CD4-positive, alpha-beta memory T cell (primary cell): ENCODE measurements at regions of chr1 and their contacts with region 1.

Region 1: GRCh38 chr1:18575620-18576019 is 55.0 kb upstream of the PAX7 start:
- DNase-seq: peak in 3 of 5 donors; percentile 14 to 23 (median 16)
- H3K4me3 ChIP-seq: no peak overlapping the region
- H3K4me3 Mint-ChIP-seq: no peak overlapping the region
- H3K27ac ChIP-seq: no peak overlapping the region
- H3K27ac Mint-ChIP-seq: no peak overlapping the region
- H3K4me1 ChIP-seq: no peaks in the 10 kb centered on the region
- H3K4me1 Mint-ChIP-seq: peaks cover 0 to 1% (median 0%) of the 10 kb centered on the region in 4 donors
- H3K27me3 ChIP-seq: no peaks in the 10 kb centered on the region
- H3K27me3 Mint-ChIP-seq: peaks cover 6 to 17% of the 10 kb centered on the region in 2 donors

Region 2: DNA sequence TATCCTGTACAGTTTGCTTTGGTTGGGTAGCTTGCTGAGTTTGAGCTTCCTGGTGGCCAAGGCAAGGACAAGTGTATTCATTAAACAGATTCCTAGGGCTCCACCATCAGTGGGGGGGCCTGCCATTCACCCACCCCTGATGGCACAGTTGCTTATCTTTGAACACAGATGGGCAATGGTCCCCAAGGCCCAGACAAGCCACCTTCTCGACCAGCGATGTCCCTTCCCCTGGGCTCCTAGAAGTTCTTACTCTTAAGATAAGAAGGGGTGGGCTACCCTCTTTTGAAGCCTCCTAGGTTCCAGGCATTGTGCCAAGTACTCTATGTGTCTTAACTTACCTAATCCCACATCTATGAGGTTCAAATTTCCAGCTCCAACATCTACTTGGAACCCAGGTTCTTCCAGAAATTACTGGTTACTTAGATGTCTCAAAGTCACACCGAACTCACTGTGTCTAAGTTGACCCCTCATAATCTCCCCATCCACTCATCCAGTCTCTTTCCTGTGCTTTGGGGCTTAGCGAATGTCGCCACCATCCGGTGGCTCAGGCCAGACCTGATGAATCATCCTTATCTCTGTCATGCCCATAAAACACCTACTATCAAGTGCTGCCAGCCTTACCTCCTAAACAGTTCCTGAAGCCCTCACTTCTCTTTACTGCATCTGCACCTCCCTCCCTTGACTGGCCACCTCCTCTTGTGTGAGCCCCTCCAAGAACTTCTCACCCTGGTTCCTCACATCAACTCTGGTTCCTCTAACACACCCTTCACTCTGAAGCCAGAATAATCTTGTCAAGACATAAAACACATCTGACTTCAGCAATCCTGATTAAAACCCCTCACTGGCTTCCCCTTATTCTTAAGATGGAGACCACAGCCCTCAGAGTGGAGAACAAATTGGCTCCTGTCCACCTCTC is 44.8 kb before region 1 on chr1:
- CTCF ChIA-PET with region 1: no interaction called
- POLR2A ChIA-PET with region 1: no interaction called
- intact Hi-C with region 1: no loop called
- DNase-seq: no peak
- H3K4me3 ChIP-seq: no peak overlapping the region
- H3K4me3 Mint-ChIP-seq: no peak overlapping the region
- H3K27ac ChIP-seq: no peak overlapping the region
- H3K27ac Mint-ChIP-seq: no peak overlapping the region
- H3K4me1 ChIP-seq: no peaks in the 10 kb centered on the region
- H3K4me1 Mint-ChIP-seq: no peaks in the 10 kb centered on the region
- H3K27me3 ChIP-seq: no peaks in the 10 kb centered on the region
- H3K27me3 Mint-ChIP-seq: peaks cover 11 to 18% of the 10 kb centered on the region in 2 donors

Region 3: DNA sequence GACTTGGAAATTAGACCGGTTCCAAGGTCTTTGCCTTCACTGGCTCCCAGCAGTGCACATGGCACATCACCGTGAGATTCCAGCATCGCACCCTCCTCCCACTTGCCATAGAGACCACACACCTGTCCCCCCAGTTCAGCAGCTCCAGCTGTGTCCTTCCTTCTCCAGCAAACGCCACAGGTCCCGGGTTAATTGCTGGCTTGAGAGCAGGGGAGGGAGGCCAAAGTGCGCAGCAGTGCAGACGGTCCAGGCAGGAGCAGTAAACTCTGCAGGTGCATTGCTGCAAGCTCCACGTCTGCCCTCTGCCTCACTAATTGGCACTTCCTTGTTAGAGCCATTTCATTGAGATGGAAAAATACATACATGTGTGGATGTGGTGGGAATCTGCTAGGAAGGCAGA is 29.6 kb before region 1 on chr1:
- CTCF ChIA-PET with region 1: no interaction called
- POLR2A ChIA-PET with region 1: no interaction called
- intact Hi-C with region 1: no loop called
- DNase-seq: no peak
- H3K4me3 ChIP-seq: no peak overlapping the region
- H3K4me3 Mint-ChIP-seq: no peak overlapping the region
- H3K27ac ChIP-seq: no peak overlapping the region
- H3K27ac Mint-ChIP-seq: no peak overlapping the region
- H3K4me1 ChIP-seq: no peaks in the 10 kb centered on the region
- H3K4me1 Mint-ChIP-seq: no peaks in the 10 kb centered on the region
- H3K27me3 ChIP-seq: no peaks in the 10 kb centered on the region
- H3K27me3 Mint-ChIP-seq: peaks cover 27 to 50% of the 10 kb centered on the region in 2 donors

Region 4: DNA sequence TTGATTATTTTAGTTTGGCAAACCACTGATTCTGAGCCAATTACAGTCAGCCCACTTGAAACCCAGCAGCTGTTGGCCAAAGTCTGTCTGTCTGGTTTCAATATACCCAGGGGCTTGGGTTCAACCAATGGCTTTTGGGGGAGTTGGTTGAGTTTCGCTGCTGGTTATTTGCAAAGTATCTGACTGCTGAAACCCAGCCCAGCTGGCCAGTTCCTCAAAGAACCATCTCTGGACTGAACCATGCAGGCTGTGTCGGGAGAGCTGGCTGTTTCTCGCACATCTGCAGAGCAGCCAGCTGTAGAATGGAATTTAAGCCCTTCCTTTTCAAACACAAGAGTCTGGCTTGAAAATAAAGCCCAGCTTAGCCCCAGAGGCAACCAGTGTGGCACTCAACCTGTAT is 10.9 kb before region 1 on chr1:
- CTCF ChIA-PET with region 1: interaction called, 30 read pairs
- POLR2A ChIA-PET with region 1: no interaction called
- intact Hi-C with region 1: no loop called
- DNase-seq: no peak
- H3K4me3 ChIP-seq: no peak overlapping the region
- H3K4me3 Mint-ChIP-seq: no peak overlapping the region
- H3K27ac ChIP-seq: no peak overlapping the region
- H3K27ac Mint-ChIP-seq: no peak overlapping the region
- H3K4me1 ChIP-seq: no peaks in the 10 kb centered on the region
- H3K4me1 Mint-ChIP-seq: no peaks in the 10 kb centered on the region
- H3K27me3 ChIP-seq: no peaks in the 10 kb centered on the region
- H3K27me3 Mint-ChIP-seq: peaks cover 26 to 42% of the 10 kb centered on the region in 2 donors

Region 5: DNA sequence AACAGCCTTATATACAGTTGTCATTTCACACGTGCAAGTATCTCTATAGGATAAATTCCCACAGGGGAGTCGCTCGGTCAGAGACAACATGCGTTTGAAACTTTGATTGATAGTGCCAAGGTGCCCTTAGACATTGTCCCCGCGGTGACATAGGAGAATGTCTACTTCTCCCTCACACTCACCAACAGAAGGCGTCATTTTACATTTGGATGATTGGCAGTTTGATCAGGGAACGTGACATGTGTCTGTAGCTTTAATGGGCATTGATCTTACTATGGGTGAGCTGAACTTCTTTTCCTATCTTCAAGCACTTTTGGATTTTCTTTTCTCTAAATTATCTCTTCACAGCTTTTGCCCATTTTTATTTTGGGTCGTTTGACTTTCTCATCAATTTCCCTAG is 12.5 kb after region 1 on chr1:
- CTCF ChIA-PET with region 1: interaction called, 36 read pairs
- POLR2A ChIA-PET with region 1: no interaction called
- intact Hi-C with region 1: no loop called
- DNase-seq: no peak
- H3K4me3 ChIP-seq: no peak overlapping the region
- H3K4me3 Mint-ChIP-seq: no peak overlapping the region
- H3K27ac ChIP-seq: no peak overlapping the region
- H3K27ac Mint-ChIP-seq: no peak overlapping the region
- H3K4me1 ChIP-seq: no peaks in the 10 kb centered on the region
- H3K4me1 Mint-ChIP-seq: no peaks in the 10 kb centered on the region
- H3K27me3 ChIP-seq: no peaks in the 10 kb centered on the region
- H3K27me3 Mint-ChIP-seq: peaks cover 9 to 28% of the 10 kb centered on the region in 2 donors